HEK293T (cell line): ENCODE measurements at regions of chr15 and their contacts with region 1.

Region 1: DNA sequence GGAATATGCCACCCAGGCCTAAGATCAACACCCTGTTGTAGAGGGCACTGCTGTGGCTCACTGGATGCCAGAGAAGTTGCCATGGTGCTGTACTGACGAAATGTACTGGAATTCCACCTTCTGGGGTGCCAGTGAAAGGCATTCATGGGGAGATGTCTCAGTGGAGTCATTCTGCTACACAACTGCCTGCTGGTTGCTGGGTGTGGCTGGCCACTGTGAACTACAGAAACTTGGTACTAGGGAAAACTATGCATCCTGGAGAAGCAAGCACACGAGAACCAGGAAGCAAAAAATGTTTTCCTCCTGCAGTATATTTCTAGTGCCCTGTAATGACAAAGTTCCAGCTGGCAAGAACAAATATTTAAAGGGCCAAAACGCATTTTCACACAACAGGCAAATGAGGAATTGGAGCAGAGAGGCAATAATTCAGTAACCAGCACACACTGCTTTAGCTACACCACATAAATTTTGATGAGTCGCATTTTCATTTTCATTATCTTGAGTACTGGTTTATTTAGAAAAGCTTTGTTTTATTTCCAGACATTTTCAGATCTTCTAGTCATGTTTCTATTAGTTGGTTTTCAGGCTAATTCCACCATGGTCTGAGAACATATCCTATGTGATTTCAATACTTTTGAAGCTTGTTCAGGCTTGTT is 18.3 kb upstream of the RFX7 start:
- DNase-seq: no peak

Region 2: GRCh38 chr15:56222302-56222701 is 39.7 kb before region 1 on chr15:
- CTCF ChIA-PET with region 1: no interaction called
- POLR2A ChIA-PET with region 1: no interaction called
- DNase-seq: no peak

Region 3: GRCh38 chr15:56285981-56286612 is 24.1 kb after region 1 on chr15:
- CTCF ChIA-PET with region 1: interaction called, 10 read pairs
- POLR2A ChIA-PET with region 1: no interaction called
- DNase-seq: no peak